IMR-90 (cell line): ENCODE measurements at regions of chr3 and their contacts with region 1.

Region 1: DNA sequence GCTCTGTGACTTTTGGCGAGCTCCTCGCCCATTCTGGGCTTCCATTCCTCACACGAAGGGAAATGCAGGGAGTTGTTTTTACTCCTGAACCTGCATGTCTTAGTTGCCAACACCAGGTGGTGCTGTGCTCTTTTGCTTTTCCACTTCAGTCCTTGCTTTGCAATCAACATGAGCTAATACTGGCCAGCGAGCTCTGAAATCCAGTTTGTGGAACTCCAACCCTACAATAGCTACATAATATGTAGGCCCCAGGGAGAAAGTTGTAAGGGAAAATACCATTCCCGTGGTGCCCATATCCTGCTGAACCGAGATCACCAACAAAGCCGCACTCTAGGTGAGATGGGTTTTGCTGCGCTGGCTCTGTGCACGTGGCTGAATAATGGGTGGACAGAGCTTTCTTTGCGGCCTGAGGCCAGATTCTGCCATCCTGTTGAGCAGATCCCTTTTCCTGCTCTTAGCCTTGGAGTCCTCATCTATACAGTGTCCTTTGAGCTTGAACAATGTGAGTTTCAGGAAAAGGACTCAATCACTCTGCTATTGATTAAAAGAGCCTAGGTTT is 25.0 kb downstream of the LSM3 start:
- DNase-seq: peak; percentile 87
- ATAC-seq: peak; percentile 80
- H3K4me3 ChIP-seq: no peak overlapping the region
- H3K27ac ChIP-seq: peak overlapping the region; percentile 70; the same call in 1 of the 2 replicates
- H3K4me1 ChIP-seq: peaks cover 34% of the 10 kb centered on the region
- H3K27me3 ChIP-seq: no peaks in the 10 kb centered on the region
- CTCF ChIP-seq: peak; percentile 87
- POLR2A ChIP-seq: no peak
- RAD21 ChIP-seq: peak; percentile 94

Region 2: GRCh38 chr3:13916375-13916774 is 287.2 kb before region 1 on chr3:
- CTCF ChIA-PET with region 1: no interaction called
- POLR2A ChIA-PET with region 1: no interaction called
- dilution Hi-C with region 1: no loop called
- in situ Hi-C with region 1: no loop called
- intact Hi-C with region 1: no loop called
- DNase-seq: no peak
- ATAC-seq: no peak
- H3K4me3 ChIP-seq: no peak overlapping the region
- H3K27ac ChIP-seq: no peak overlapping the region
- H3K4me1 ChIP-seq: no peaks in the 10 kb centered on the region
- H3K27me3 ChIP-seq: no peaks in the 10 kb centered on the region
- CTCF ChIP-seq: no peak
- POLR2A ChIP-seq: no peak
- RAD21 ChIP-seq: no peak

Region 3: DNA sequence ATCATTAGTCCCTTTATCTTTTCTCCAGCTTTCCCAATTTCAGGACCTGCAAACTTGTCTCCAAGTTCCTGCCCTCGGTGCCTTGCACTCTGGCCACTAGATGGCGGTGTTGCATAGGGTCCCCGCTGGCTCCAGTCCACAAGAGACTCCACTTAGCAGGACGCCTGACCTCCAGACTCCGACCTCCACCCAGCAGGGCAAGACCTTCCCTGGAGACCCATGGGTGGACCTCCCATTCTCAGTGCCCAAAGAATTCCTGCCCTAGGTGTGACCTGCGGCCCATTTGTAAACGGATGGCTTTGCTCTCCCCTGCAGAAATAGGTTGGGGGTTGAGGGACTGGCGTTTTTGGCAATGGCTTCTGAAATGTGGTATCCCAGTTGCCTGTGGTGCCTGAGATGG is 57.6 kb after region 1 on chr3:
- CTCF ChIA-PET with region 1: interaction called, 28 read pairs
- POLR2A ChIA-PET with region 1: no interaction called
- dilution Hi-C with region 1: no loop called
- in situ Hi-C with region 1: no loop called
- intact Hi-C with region 1: loop called (anchors 1 kb)
- DNase-seq: peak; percentile 77
- ATAC-seq: peak; percentile 75
- H3K4me3 ChIP-seq: no peak overlapping the region
- H3K27ac ChIP-seq: no peak overlapping the region
- H3K4me1 ChIP-seq: peaks cover 21% of the 10 kb centered on the region
- H3K27me3 ChIP-seq: no peaks in the 10 kb centered on the region
- CTCF ChIP-seq: peak; percentile 97
- POLR2A ChIP-seq: 0 out of 2 replicates have a peak, but pooled peaks have one; percentile 44
- RAD21 ChIP-seq: peak; percentile 97

Region 4: DNA sequence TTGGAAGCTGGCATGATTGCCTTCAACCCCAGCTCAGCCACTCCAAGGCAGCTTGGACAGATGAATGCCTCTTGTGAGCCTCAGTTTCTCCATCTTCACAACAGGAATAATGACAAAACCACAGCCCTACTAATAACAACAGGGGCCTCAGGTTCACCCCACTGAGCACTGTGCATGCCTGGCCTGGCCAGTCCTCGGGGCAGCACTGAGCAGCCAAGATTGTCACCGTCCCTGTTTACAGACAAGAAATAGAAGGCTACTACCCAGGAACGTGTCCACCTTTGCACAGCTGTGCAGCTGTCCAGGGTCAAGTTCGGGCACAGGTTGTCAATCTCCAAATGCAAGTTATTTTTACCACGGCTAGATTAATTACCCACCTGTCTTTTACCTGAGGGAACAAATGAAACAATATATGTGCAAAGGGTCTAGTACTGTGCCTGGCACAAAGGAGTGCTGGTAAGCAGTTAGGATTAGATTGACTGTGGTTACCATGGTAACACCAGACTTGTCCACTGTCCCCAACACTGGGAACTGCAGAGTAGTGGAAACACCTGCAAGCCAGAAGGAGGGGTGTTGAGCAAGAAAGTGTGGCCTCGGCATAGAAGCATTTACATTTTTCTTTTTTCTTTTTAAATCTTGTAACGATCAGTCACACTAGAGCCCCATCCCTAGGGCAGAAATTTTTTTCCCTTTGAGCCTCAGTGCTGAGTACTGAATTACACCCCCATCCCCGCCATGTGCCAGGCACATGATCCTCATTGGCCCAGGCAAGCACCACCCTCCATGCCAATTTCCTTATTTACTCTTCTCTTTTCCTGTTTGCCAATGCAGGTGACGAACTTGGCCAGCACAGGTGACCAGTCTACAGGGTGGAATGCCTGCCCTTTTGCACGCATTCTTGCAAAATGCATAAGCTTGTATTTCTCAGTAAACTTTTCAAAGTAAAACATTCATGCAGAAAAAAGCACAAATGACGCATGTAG is 132.5 kb after region 1 on chr3:
- CTCF ChIA-PET with region 1: no interaction called
- POLR2A ChIA-PET with region 1: no interaction called
- dilution Hi-C with region 1: no loop called
- in situ Hi-C with region 1: no loop called
- intact Hi-C with region 1: no loop called
- DNase-seq: no peak
- ATAC-seq: no peak
- H3K4me3 ChIP-seq: no peak overlapping the region
- H3K27ac ChIP-seq: no peak overlapping the region
- H3K4me1 ChIP-seq: no peaks in the 10 kb centered on the region
- H3K27me3 ChIP-seq: peaks cover 17% of the 10 kb centered on the region
- CTCF ChIP-seq: no peak
- POLR2A ChIP-seq: no peak
- RAD21 ChIP-seq: no peak

Region 5: GRCh38 chr3:14402304-14402811 is 198.8 kb after region 1 on chr3 and contains the start of gene SLC6A6:
- CTCF ChIA-PET with region 1: no interaction called
- POLR2A ChIA-PET with region 1: no interaction called
- dilution Hi-C with region 1: no loop called
- in situ Hi-C with region 1: no loop called
- intact Hi-C with region 1: loop called (anchors 1 kb)
- DNase-seq: peak; percentile 93
- ATAC-seq: peak; percentile 84
- H3K4me3 ChIP-seq: peak within 1 kb of the TSS; percentile 73
- H3K27ac ChIP-seq: peak within 1 kb of the TSS; percentile 80
- H3K4me1 ChIP-seq: peaks cover 19% of the 10 kb centered on the region
- H3K27me3 ChIP-seq: no peaks in the 10 kb centered on the region
- CTCF ChIP-seq: peak; percentile 36
- POLR2A ChIP-seq: peak; percentile 87
- RAD21 ChIP-seq: peak; percentile 39
- total RNA-seq, gene SLC6A6: 29.9 and 32.5 TPM in 2 replicates

Region 6: GRCh38 chr3:14467814-14468620 is 264.4 kb after region 1 on chr3:
- CTCF ChIA-PET with region 1: interaction called, 17 read pairs
- POLR2A ChIA-PET with region 1: no interaction called
- dilution Hi-C with region 1: no loop called
- in situ Hi-C with region 1: loop called (anchors 5 kb)
- intact Hi-C with region 1: loop called (anchors 1 kb)
- DNase-seq: peak; percentile 46
- ATAC-seq: peak; percentile 64
- H3K4me3 ChIP-seq: no peak overlapping the region
- H3K27ac ChIP-seq: no peak overlapping the region
- H3K4me1 ChIP-seq: peaks cover 12% of the 10 kb centered on the region
- H3K27me3 ChIP-seq: no peaks in the 10 kb centered on the region
- CTCF ChIP-seq: peak; percentile 81
- POLR2A ChIP-seq: no peak
- RAD21 ChIP-seq: peak; percentile 91

Region 7: GRCh38 chr3:14651440-14652251 is 448.0 kb after region 1 on chr3 and contains the start of gene CCDC174:
- CTCF ChIA-PET with region 1: no interaction called
- POLR2A ChIA-PET with region 1: no interaction called
- dilution Hi-C with region 1: no loop called
- in situ Hi-C with region 1: no loop called
- intact Hi-C with region 1: loop called (anchors 5 kb)
- DNase-seq: peak; percentile 99
- ATAC-seq: peak; percentile 100
- H3K4me3 ChIP-seq: peak within 1 kb of the TSS; percentile 62
- H3K27ac ChIP-seq: peak within 1 kb of the TSS; percentile 85
- H3K4me1 ChIP-seq: no peaks in the 10 kb centered on the region
- H3K27me3 ChIP-seq: no peaks in the 10 kb centered on the region
- CTCF ChIP-seq: 0 out of 2 replicates have a peak, but pooled peaks have one; percentile 5
- POLR2A ChIP-seq: peak; percentile 91
- RAD21 ChIP-seq: no peak
- total RNA-seq, gene CCDC174: 5.9 and 6.9 TPM in 2 replicates